Activated CD4-positive, alpha-beta T cell treated with anti-CD3 and anti-CD28 coated beads, Interleukin-2, amount 10 ng/mL, durations not matched to agents 24 days and 14 days (primary cell): ENCODE measurements at regions of chr1 and their contacts with region 1.

Region 1: DNA sequence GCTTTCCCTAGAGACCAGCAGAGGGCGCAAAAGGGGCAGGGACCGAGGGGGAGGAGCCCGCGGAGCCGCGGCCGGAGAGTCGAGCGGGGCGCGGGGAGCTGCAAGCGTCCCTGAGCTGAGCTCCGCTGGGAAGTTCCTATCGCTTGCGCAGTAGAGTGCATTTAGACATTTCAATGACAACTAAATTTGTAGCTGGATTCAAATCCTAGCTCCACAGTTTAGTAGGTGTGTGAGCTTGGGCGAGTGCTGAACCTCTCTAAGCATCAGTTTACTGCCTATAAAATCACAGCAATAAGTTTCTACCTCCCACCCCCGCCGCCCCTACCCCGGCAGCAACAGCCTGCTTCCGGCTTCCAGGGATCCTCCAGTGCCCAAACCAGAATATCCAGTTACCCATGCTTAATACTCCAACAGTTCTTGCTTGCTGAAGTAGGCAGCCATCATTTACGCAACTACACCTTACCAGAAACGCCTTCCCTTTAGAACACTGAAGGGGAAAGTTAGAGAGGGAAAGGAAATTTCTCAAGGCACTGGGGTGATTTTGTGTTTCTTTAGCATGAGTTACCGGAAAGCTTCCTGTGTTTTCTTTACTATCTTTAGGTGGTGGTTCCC is 9.1 kb downstream of the TLR5 start:
- DNase-seq: peak; percentile 93
- H3K4me3 Mint-ChIP-seq: peak overlapping the region; percentile 13
- H3K27ac Mint-ChIP-seq: no peak overlapping the region
- H3K4me1 Mint-ChIP-seq: peaks cover 2% of the 10 kb centered on the region
- H3K27me3 Mint-ChIP-seq: peaks cover 59% of the 10 kb centered on the region

Region 2: DNA sequence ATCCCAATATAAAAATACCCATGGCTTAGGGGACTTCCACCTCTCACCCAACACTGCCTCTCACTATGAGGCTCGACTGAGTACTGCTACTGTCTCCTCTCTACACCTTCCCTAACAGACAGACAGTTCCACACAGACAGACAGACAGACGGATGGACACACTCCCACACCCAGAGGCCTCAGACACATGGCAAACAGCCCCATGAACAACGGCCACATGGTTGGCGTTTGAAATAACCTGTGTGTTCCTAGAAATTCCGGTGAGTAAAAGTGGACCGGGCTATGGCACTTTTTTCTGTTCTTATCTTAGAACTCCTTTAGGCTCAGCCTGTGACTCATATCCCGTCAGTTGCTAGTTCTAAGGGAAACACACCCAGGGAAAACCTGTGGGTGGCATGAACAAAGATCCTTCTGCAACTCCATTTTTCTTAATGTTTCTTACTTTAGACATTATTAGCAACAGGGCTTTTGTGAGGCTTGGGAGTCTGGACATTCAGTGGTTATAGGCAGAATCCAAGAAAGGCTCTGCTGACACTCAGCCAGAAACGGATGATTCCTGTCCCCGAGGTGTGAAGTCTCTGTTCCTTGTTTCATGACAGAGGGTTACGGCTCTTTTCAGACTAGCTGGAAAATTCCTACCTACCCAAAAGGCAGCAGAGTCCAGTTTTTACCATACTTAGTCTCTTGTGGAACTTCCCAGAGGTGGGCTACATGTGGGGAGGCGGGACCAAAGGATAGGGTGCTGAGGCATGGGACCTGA is 99.7 kb after region 1 on chr1:
- intact Hi-C with region 1: loop called (anchors 5 kb)
- DNase-seq: no peak
- H3K4me3 Mint-ChIP-seq: peak overlapping the region; percentile 4
- H3K27ac Mint-ChIP-seq: peak overlapping the region; percentile 26
- H3K4me1 Mint-ChIP-seq: peaks cover 13% of the 10 kb centered on the region
- H3K27me3 Mint-ChIP-seq: peaks cover 1% of the 10 kb centered on the region

Region 3: DNA sequence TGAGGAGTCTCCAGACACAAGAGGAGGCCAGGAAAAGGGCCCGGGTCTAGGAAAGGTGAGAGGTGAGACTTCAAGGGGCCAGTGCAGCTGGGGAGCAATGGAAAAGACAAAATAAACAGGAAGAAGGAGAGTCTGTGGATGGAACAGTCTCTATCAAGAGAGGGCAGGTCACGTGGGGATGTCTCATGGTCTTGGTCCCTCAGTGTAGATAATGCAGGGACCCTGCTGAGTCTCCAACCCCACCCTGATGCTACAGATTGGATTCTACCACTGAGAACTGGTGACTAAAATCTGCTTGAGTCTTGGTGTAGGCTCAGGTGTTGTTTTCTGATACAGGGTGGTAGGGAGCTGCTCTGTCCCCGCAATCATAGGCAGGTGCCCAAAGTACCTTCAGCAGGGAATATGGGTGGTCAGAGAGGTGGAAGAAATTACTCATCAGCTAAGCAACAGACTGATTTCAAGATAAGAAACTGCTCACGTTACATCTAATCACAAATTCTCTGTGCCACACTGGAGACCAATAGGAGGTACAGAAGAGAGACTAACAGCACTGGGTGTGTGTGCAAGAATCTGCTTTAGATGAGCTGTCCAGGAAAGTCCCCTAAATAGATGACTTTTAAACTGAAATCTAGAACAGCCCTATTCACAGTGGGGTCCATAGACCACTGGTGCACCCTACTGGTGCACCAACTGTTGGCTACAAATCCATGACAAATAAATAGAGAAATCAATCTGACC is 110.6 kb after region 1 on chr1:
- intact Hi-C with region 1: loop called (anchors 2 kb)
- DNase-seq: no peak
- H3K4me3 Mint-ChIP-seq: no peak overlapping the region
- H3K27ac Mint-ChIP-seq: no peak overlapping the region
- H3K4me1 Mint-ChIP-seq: peaks cover 6% of the 10 kb centered on the region
- H3K27me3 Mint-ChIP-seq: peaks cover 2% of the 10 kb centered on the region

Region 4: DNA sequence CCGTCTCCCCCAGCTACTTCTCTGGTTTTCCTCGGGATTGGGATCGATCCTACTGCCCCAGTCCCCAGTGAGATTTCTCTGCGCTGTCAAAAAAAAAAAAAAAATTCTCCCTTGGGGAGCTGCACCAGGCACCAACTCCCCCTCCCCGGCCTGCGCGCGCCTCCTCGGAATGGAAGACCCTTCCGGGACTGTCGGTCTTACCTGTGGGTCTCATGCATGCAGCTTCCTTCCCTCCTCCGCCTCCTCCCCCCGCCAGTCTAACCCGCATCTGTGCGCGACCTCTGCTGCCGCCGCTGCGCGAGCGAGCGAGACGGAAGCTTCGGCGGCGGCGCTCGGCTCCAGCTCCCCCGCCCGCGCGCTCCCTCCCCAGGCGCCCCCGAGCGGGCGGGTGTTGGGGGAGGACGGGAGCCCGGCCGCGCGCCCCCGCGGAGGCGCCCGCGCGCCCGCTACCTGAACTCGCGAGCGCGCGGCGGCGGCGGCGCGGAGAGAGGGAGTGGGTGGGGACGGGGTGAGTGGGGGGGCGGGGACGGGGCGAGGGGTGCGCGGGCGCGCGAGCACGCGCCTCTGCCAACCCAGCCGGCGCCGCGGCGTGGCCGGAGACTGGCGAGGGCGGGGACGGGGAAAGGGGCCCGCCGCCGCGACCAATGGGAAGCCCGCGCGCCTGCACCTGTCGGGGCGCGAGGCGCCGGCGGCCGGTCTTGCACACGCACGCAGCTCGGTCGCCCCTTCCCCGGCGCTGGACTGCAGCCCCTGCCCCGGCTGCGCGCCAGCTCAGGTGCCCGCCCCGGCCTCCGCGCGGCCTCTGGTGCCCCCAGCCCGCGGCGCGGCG is 230.1 kb after region 1 on chr1 and contains the start of gene SUSD4:
- intact Hi-C with region 1: loop called (anchors 1 kb)
- DNase-seq: peak; percentile 83
- H3K4me3 Mint-ChIP-seq: peak within 1 kb of the TSS; percentile 85
- H3K27ac Mint-ChIP-seq: no peak within 1 kb of the TSS
- H3K4me1 Mint-ChIP-seq: peaks cover 4% of the 10 kb centered on the region
- H3K27me3 Mint-ChIP-seq: peaks cover 56% of the 10 kb centered on the region
- total RNA-seq, gene SUSD4: not detected in 2 replicates

Region 5: GRCh38 chr1:223683586-223684487 is 549.9 kb after region 1 on chr1:
- intact Hi-C with region 1: loop called (anchors 2 kb)
- DNase-seq: peak; percentile 73
- H3K4me3 Mint-ChIP-seq: no peak overlapping the region
- H3K27ac Mint-ChIP-seq: no peak overlapping the region
- H3K4me1 Mint-ChIP-seq: no peaks in the 10 kb centered on the region
- H3K27me3 Mint-ChIP-seq: peaks cover 30% of the 10 kb centered on the region